ENCODE measurements at regions of chr7 and their contacts with region 1.

Region 1: DNA sequence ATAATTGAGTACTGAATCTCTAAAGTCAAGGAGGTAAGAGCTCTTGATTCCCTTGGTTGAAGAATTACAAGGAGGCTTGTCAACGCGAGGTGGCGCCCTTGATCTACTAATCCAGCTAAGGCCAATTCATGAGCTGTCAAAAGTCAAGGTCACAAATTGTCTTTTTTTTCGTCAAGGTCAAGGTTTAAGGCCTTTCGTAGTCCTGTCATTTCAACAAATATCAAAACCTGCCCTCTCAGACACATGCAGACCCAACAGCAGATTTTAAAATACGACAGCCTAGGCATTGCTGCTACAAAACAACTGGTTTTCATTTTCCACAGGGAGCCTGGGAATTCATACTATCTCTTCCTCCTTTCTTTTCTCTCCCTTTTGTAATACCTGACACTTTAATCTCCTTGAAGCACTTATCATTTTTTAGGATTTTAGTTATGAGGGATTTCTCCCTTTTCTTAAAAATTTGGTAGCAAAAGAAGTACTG is 3.6 kb downstream of the HOXA13 start:
- DNase-seq: no peak
- H3K4me3 ChIP-seq: peak overlapping the region; percentile 55
- H3K27me3 ChIP-seq: no peaks in the 10 kb centered on the region
- CTCF ChIP-seq: peak; percentile 74

Region 2: DNA sequence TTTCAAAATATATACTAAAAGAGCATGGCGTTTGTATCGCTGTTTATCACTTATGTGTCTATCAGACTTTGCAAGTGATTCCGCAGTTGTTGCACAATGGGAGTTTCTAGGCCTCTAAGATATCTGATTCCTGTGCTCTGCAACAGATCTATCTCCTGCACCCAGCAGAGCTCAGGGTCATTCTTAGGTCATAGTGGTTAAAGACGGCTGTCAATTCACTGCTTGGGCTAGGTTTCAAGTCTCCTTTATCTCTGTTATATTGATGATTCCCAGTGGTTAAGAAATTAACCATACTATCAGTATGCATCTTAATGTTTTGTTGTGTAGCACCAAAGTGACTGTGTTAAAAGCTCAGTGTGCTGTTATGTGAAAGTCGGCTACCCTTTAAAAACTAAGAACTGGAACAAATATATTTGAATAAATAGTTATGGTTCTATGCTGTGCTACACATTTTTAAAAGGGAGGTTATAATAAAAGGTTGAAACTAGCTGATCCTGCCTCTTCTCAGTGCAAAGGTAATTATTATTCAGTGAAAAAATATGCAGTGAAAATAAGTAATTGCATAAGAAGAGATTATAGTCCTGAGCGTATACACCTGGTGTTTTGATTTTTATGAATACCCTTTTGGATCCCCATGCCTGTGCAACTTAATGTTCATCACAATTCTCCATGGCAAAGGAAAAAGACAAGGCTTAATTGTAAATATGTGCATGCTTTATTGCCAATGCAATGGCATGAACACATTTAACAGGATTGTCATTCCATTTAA is 124.5 kb before region 1 on chr7:
- CTCF ChIA-PET with region 1: no interaction called
- POLR2A ChIA-PET with region 1: no interaction called
- DNase-seq: no peak
- H3K4me3 ChIP-seq: no peak overlapping the region
- H3K27me3 ChIP-seq: peaks cover 2% of the 10 kb centered on the region; the same call in 1 of the 2 replicates
- CTCF ChIP-seq: no peak

Region 3: GRCh38 chr7:27172823-27173510 is 23.4 kb before region 1 on chr7:
- CTCF ChIA-PET with region 1: interaction called, 187 read pairs
- POLR2A ChIA-PET with region 1: interaction called, 6 read pairs
- DNase-seq: peak; percentile 79
- H3K4me3 ChIP-seq: peak overlapping the region; percentile 72
- H3K27me3 ChIP-seq: no peaks in the 10 kb centered on the region
- CTCF ChIP-seq: no peak

Region 4: DNA sequence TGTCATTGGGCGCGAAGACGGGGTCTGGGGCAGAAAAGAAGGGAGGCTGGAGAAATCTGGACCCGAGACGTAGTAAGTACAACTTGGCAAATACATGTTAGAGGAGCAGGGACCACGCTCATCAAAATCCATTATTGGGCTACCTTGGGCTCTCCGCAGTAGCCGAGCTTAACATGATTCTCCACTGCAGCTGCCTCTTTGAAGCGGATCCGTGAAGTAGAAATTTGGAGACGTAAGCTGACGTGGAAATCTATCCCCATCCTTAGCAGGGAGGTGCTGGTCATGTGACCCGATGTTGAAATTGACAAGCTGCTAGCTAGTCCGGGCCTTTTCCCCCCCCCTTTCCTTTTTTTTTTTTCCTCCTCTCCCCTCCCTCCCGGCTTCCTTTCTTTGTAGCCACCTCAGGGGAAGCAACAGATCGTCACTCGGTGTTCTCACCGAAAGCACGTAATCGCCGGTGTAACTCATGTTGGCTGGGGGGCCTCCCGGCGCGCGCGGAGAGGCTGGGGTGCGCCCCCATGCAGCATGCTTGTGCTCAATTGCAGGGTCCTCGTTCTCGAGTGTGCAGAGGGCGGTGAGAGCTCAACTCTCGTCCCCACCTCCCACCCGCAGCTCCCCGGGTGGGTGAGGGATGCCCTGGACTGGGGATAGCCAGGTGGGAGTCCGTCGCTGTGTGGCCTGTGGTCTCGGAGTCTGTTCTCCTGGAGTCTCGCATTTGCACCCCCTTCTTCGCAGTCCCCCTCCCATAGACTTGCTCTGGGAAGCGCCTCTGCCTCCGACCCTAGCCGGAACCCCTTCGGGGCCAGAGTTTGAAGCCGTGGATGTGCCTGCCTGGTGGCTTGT is 11.1 kb before region 1 on chr7 and contains the start of gene HOXA11:
- CTCF ChIA-PET with region 1: interaction called, 187 read pairs
- POLR2A ChIA-PET with region 1: interaction called, 4 read pairs
- DNase-seq: peak; percentile 94
- H3K4me3 ChIP-seq: peak within 1 kb of the TSS; percentile 88
- H3K27me3 ChIP-seq: no peaks in the 10 kb centered on the region
- CTCF ChIP-seq: no peak
- polyA plus RNA-seq, gene HOXA11: 27.7 and 34.0 TPM in 2 replicates

Region 5: GRCh38 chr7:27224983-27225934 is 28.9 kb after region 1 on chr7:
- CTCF ChIA-PET with region 1: no interaction called
- POLR2A ChIA-PET with region 1: no interaction called
- DNase-seq: no peak
- H3K4me3 ChIP-seq: no peak overlapping the region
- H3K27me3 ChIP-seq: peaks cover 13% of the 10 kb centered on the region
- CTCF ChIP-seq: no peak

Region 6: GRCh38 chr7:27576360-27576944 is 380.1 kb after region 1 on chr7:
- CTCF ChIA-PET with region 1: interaction called, 13 read pairs
- POLR2A ChIA-PET with region 1: no interaction called
- DNase-seq: no peak
- H3K4me3 ChIP-seq: no peak overlapping the region
- H3K27me3 ChIP-seq: no peaks in the 10 kb centered on the region
- CTCF ChIP-seq: peak; percentile 47

Region 7: GRCh38 chr7:27774717-27775328 is 578.5 kb after region 1 on chr7:
- CTCF ChIA-PET with region 1: interaction called, 12 read pairs
- POLR2A ChIA-PET with region 1: no interaction called
- DNase-seq: no peak
- H3K4me3 ChIP-seq: no peak overlapping the region
- H3K27me3 ChIP-seq: no peaks in the 10 kb centered on the region
- CTCF ChIP-seq: peak; percentile 72

Region 8: DNA sequence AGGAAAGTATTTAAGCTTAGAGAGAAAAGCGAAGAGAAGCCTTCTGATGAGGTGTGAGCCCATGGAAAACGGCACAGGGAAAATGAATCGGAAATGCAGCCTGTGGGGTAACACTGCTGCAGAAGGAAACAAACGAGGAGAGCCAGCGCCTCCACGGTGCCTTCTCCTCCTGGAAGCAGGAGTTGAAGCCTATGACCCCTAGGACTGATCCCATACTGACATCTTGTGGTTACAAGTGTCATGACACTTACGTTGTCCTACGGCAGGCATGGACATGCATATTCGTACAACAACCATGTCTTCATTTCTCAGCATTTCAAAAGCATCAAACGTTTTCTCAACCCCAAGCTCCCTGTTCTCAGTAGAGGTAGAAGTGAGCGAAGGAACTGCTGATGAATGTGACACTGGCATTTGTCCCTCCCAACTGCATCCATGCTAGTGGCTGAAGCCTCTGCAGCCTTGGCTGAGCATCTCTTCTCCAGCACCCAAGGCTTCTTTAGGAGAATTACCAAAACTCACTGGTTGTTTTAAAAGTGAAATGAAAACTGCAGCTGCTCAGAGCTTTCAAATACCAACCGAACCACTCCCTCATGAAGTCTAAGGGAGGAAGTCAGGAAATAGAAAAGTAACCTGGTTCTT is 824.1 kb after region 1 on chr7:
- CTCF ChIA-PET with region 1: interaction called, 10 read pairs
- POLR2A ChIA-PET with region 1: no interaction called
- DNase-seq: no peak
- H3K4me3 ChIP-seq: no peak overlapping the region
- H3K27me3 ChIP-seq: no peaks in the 10 kb centered on the region
- CTCF ChIP-seq: peak; percentile 82